ENCODE measurements at regions of chr17 and their contacts with region 1.

Region 1: GRCh38 chr17:979538-980405 is at the start of gene NXN:
- DNase-seq: peak; percentile 81
- H3K4me3 Mint-ChIP-seq: peak within 1 kb of the TSS; percentile 78
- H3K27ac Mint-ChIP-seq: peak within 1 kb of the TSS; percentile 55
- H3K4me1 Mint-ChIP-seq: peaks cover 14% of the 10 kb centered on the region
- H3K27me3 Mint-ChIP-seq: peaks cover 33% of the 10 kb centered on the region
- total RNA-seq, gene NXN: 0.24 and 0.31 TPM in 2 replicates

Region 2: DNA sequence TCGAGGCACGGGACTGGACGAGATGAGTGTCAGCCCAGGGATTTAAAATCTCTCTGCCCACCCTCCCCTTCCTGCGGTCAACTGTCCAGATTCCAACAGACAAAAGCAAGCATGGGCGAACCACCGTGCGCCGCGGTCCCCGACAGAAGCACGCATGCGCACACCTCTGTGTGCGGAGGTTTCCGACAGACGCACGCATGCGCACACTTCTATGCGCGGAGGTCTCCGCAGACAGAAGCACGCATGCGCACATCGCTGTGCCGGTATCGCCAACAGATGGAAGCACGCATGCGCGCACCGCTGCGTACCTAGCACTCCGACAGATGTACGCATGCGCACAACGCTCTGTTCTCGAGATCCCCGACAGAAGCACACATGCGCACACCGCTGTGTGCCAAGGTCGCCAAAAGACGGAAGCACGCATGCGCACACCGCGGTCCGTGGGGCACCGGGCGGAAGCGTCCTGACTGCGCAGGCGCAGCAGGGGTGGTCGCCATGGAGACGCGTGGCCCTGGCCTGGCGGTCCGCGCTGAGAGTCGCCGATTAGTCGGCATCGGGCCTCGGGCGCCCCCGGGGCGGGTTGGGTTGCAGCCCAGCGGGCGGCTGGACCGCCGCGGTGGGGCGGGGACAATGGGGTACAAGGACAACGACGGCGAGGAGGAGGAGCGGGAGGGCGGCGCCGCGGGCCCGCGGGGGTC is 569.8 kb before region 1 on chr17:
- intact Hi-C with region 1: loop called (anchors 1 kb)
- DNase-seq: peak; percentile 99
- H3K4me3 Mint-ChIP-seq: peak overlapping the region; percentile 95
- H3K27ac Mint-ChIP-seq: peak overlapping the region; percentile 89
- H3K4me1 Mint-ChIP-seq: peaks cover 57% of the 10 kb centered on the region
- H3K27me3 Mint-ChIP-seq: peaks cover 7% of the 10 kb centered on the region

Region 3: DNA sequence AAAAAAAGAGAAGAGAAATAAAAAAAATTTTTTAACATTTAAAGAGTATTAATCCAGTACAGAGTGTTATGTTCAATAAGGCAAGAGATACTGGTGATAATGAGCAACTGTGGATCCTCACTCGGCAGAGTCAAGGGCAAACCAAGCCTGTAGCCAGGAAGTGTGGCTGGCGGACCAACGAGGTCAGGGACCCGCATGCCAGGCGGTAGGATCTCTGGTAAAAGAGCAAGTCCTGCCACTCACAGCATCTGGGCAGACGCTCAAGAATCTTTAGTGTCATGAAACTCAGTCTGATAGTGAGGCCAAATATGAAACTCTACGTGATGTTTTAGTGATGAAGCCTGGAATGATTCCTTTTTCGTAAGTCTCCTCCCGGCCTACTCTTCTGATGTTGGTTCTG is 219.4 kb before region 1 on chr17:
- intact Hi-C with region 1: no loop called
- DNase-seq: no peak
- H3K4me3 Mint-ChIP-seq: no peak overlapping the region
- H3K27ac Mint-ChIP-seq: no peak overlapping the region
- H3K4me1 Mint-ChIP-seq: no peaks in the 10 kb centered on the region
- H3K27me3 Mint-ChIP-seq: no peaks in the 10 kb centered on the region

Region 4: DNA sequence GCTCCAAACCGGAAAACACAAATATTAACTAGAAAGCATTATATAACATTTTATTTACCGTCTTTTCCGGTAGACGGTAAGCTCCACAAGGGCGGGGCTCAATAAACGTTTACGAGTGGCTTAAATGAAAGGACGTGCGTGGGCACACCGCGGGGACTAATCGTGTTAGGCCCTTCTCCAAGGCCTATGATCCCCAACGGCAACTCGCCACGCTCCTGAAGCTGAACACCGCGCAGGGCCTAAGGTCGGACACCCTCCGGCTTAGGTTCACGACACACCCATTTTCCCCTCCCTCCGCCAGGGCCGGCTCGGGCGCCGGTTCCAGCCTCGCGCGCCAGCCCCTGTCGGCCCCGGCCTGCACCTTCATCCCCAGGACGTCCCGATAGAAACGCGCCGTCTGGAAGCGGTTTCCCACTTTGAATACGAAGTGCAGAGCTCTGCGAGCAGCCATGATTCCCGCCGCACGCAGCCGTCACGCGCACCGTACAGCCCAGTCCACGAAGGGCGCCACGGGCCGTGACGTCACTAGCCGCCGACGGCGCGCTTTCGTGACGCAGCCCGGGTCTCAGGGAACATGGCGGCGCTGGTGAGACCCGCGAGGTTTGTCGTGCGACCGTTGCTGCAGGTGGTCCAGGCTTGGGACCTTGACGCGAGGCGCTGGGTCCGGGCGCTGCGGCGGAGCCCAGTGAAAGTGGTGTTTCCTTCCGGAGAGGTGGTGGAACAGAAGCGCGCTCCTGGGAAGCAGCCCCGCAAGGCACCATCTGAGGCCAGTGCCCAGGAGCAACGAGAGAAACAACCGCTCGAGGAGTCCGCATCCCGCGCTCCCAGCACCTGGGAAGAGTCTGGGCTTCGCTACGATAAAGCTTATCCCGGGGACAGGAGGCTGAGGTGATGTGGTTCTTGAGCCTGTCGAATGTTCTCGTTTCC is 197.7 kb before region 1 on chr17 and contains the starts of genes GLOD4 and MRM3:
- intact Hi-C with region 1: loop called (anchors 1 kb)
- DNase-seq: peak; percentile 94
- H3K4me3 Mint-ChIP-seq: peak within 1 kb of the TSS; percentile 97
- H3K27ac Mint-ChIP-seq: peak within 1 kb of the TSS; percentile 97
- H3K4me1 Mint-ChIP-seq: peaks cover 37% of the 10 kb centered on the region
- H3K27me3 Mint-ChIP-seq: no peaks in the 10 kb centered on the region
- total RNA-seq, gene GLOD4: 97.0 and 97.6 TPM in 2 replicates
- total RNA-seq, gene MRM3: 31.7 and 32.0 TPM in 2 replicates

Region 5: DNA sequence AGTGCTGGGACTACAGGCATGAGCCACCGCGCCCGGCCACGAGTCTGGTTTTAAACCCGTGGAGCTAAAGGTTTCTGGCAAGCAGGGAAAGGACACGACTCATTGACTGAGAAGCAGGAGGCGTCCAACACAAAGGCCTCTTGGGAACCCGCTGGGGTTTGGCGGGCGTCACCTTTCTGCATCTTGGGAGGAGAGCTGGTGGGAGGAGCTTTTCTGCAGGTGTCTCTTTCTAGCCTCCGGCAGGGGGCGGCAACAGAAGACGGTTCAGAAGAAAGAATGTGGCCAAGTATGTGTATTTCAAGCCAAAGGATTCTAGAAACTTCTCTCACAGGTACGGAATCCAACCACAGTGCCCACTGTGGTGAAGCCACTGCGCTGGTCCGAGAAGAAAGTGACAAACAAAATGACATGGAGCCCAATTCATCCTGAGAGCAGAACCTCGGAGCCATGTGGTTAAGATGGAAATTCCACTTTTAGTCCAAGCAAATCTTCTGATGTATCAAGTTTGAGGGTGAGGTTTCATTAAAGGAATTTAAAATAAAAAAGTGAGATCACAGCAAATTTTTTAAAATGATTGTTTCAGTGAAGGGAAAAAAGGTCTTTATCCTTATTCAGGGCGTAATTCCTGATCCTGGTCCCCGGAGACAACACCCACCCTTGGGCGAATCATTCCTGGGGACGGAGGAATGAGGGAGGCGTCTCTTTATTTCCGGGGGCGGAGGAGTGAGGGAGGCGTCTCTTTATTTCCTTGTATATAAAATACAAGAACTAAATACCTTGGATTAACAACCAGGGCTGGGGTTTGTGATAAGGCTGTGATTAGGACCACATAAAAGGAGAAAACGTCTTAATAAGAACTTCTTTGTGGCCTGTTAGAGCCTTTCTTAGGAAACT is 100.0 kb before region 1 on chr17:
- intact Hi-C with region 1: loop called (anchors 1 kb)
- DNase-seq: peak; percentile 34
- H3K4me3 Mint-ChIP-seq: no peak overlapping the region
- H3K27ac Mint-ChIP-seq: no peak overlapping the region
- H3K4me1 Mint-ChIP-seq: peaks cover 13% of the 10 kb centered on the region
- H3K27me3 Mint-ChIP-seq: peaks cover 2% of the 10 kb centered on the region

Region 6: DNA sequence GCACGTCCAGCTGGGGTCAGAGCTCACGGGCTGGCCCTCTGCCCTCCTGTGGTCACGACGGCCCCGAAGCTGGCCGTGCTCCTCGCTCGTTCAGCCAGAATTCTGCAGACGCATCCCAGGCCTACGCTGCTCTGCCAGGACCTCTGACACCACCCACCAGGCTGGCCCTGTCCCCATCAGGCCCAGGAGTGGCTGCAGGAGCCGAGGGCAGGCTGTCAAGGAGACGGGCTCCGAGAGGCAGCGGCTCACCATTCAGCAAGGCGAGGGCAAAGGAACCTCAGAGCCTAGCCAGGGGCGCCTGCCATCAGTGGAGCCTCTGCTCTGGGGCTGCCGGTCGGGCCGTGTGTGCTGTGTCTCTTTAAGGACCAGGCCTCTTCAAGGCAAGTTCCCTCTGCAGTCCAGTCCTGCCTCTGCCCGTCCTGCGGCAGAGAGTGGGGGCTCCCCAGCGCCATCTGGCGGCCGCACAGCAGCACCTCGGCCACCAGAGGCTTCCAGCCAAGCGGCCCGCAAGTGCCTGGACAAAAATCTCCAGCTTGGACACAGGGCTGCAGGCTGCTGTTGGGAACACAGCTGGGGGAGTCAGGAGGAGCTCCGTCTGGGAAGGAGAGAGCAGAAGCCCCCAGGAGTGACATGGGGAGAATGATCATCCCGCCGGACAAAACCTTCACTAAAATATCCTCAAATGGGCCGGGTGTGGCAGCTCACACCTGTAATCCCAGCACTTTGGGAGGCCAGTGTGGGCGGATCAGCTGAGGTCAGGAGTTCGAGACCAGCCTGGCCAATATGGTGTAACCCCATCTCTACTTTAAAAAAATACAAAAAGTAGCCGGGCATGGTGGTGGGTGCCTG is 207.4 kb after region 1 on chr17:
- intact Hi-C with region 1: no loop called
- DNase-seq: peak; percentile 64
- H3K4me3 Mint-ChIP-seq: no peak overlapping the region
- H3K27ac Mint-ChIP-seq: no peak overlapping the region
- H3K4me1 Mint-ChIP-seq: no peaks in the 10 kb centered on the region
- H3K27me3 Mint-ChIP-seq: peaks cover 5% of the 10 kb centered on the region

Measured in activated T-helper 1 cell treated with anti-CD3 and anti-CD28 coated beads, Interleukin-12 subunit alpha, Interleukin-12 subunit beta, Interleukin-2, Interleukin-4 antibody, amounts not matched to agents 30 ng/mL and 10 ng/mL and 1 ng/mL, durations not matched to agents 14 hours and 24 hours and 36 hours (primary cell).